Panc1 (cell line): ENCODE measurements at regions of chr18 and their contacts with region 1.

Region 1: DNA sequence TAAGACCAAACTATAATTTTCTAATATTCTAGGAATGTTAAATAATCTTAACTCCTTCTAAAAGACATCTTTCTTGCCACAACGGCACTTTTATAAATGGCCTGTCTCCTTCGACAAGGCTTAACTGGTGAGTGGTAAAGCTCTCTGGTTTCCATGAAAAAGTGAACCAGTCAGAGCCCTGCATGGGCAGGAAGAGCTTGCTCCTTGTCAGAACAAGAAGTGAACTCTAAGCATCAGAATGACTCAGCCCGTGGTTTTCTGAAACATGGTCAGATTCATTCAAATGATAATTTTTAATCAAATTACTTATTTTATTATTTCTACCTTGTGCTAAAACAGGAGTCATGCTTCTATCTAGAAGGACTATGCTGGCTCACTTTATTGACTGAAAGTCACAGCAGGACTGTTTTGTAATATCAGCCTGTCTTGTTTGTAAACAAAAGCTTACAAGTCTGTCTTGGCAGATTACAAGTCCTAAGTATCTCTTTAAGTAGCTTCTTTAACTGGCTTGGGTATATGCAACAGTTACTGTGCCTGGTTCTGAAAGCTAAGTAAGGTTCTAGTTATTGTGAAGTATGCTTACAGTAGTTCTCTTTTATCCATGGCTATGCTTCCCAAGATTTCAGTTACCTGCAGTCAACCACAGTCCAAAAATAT is 245.4 kb downstream of the NAPG start:
- DNase-seq: no peak
- ATAC-seq: no peak
- H3K4me3 ChIP-seq: no peak overlapping the region
- H3K27ac ChIP-seq: no peak overlapping the region
- H3K4me1 ChIP-seq: no peaks in the 10 kb centered on the region
- H3K27me3 ChIP-seq: peaks cover 4% of the 10 kb centered on the region
- CTCF ChIP-seq: no peak

Region 2: GRCh38 chr18:11470941-11471340 is 699.8 kb after region 1 on chr18:
- CTCF ChIA-PET with region 1: no interaction called
- POLR2A ChIA-PET with region 1: no interaction called
- in situ Hi-C with region 1: no loop called
- intact Hi-C with region 1: loop called (anchors 10 kb)
- DNase-seq: no peak
- ATAC-seq: no peak
- H3K4me3 ChIP-seq: no peak overlapping the region
- H3K27ac ChIP-seq: no peak overlapping the region
- H3K4me1 ChIP-seq: no peaks in the 10 kb centered on the region
- H3K27me3 ChIP-seq: no peaks in the 10 kb centered on the region
- CTCF ChIP-seq: no peak